Posterior vena cava (tissue), 2 donors: ENCODE measurements at regions of chrX and their contacts with region 1.

Region 1: GRCh38 chrX:139475432-139475831 is 55.1 kb upstream of the F9 start:
- DNase-seq: no peak

Region 2: GRCh38 chrX:139224953-139225665 is 250.3 kb before region 1 on chrX:
- intact Hi-C with region 1: no loop called
- DNase-seq: no peak

Region 3: GRCh38 chrX:139454756-139455155 is 20.7 kb before region 1 on chrX:
- intact Hi-C with region 1: loop called in 1 of 2 experiments (anchors 1 kb)
- DNase-seq: no peak